ENCODE measurements at regions of chr2 and their contacts with region 1.

Region 1: DNA sequence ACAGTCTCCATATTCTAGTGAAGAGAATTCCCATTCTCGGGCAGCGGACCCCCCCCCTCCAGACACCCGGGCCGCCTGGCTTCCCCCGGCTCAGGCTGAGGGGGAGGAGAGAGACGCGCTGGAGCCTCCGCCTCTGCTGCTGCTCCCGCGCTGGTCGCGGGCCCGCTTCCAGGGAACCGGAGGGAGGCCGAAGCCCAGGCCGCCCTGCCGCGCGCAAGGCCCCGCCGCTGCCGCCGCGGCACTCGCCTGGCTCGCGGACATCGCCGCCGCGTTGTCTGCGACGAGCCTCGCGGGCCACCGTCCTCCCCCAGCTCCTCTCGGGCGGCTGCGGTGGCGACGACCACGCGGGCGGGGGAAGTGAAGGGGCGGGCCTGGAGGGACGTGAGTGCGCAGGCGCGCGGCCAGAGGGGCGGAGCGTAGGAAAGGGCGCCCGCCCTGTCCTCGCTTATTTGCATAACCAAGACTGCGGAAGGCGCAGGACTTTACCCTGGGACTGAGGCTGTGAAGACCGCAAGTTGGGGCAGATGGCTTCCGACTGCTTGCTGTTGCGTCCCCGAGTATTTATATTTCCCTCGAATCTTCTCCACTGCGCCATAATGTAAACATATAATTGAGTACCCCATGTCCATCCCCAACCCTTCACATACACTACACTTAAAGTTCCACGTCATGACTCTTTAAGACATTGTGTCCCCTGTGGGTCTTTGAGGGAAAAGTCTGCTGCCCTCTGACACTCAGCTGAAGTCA is at the start of gene ARL5A:
- DNase-seq: peak; percentile 97
- ATAC-seq: peak; percentile 95
- H3K4me3 Mint-ChIP-seq: peak within 1 kb of the TSS; percentile 83
- H3K27ac Mint-ChIP-seq: peak within 1 kb of the TSS; percentile 93
- H3K4me1 Mint-ChIP-seq: peaks cover 50% of the 10 kb centered on the region
- H3K27me3 Mint-ChIP-seq: no peaks in the 10 kb centered on the region
- CTCF ChIP-seq: no peak
- total RNA-seq, gene ARL5A: 51.0 and 53.2 TPM in 2 replicates

Region 2: GRCh38 chr2:151409601-151410484 is 418.5 kb before region 1 on chr2 and contains the start of gene RIF1:
- CTCF ChIA-PET with region 1: no interaction called
- POLR2A ChIA-PET with region 1: no interaction called
- intact Hi-C with region 1: loop called (anchors 2 kb)
- DNase-seq: peak; percentile 73
- ATAC-seq: peak; percentile 90
- H3K4me3 Mint-ChIP-seq: peak within 1 kb of the TSS; percentile 89
- H3K27ac Mint-ChIP-seq: peak within 1 kb of the TSS; percentile 80
- H3K4me1 Mint-ChIP-seq: peaks cover 26% of the 10 kb centered on the region
- H3K27me3 Mint-ChIP-seq: no peaks in the 10 kb centered on the region
- CTCF ChIP-seq: no peak
- total RNA-seq, gene RIF1: 43.7 and 51.1 TPM in 2 replicates

Region 3: GRCh38 chr2:151560289-151560688 is 268.0 kb before region 1 on chr2:
- CTCF ChIA-PET with region 1: no interaction called
- POLR2A ChIA-PET with region 1: no interaction called
- intact Hi-C with region 1: no loop called
- DNase-seq: no peak
- ATAC-seq: no peak
- H3K4me3 Mint-ChIP-seq: no peak overlapping the region
- H3K27ac Mint-ChIP-seq: no peak overlapping the region
- H3K4me1 Mint-ChIP-seq: peaks cover 6% of the 10 kb centered on the region
- H3K27me3 Mint-ChIP-seq: no peaks in the 10 kb centered on the region
- CTCF ChIP-seq: no peak

Region 4: DNA sequence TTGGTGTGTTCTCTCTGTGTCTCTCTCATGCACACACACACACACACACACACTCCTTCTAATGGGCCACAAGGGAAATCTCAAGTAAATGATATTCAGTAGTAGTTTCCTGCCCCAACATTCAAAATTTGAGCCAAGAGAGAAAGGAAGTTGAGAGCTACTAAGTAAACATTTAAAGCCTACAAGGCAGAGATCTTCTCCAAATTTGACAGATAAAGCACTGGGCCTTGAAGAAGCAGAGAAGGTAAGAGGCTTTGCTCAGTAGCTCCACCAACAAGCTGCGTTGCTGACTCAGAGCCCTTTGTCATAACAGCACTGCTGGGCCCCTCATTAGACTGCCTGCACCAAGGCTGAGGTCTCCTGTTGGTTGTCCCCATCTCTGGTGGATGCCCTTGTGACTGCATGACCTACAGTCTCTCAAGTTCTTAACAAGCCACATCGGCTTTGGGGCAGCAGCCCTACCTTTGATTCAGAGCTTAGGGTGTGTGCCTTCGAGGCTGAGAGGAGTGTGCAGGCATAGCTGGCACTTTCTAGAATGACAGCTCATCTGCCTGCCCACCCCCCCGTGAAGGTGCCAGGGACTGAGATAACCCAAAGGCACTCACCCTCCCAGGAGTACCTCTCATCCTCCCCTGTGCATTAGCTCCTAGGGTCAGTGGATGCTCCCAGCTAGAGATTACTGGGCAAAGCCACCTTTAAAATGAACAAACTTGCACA is 61.7 kb before region 1 on chr2:
- CTCF ChIA-PET with region 1: no interaction called
- POLR2A ChIA-PET with region 1: interaction called, 25 read pairs
- intact Hi-C with region 1: loop called (anchors 1 kb)
- DNase-seq: peak; percentile 47
- ATAC-seq: peak; percentile 71
- H3K4me3 Mint-ChIP-seq: peak overlapping the region; percentile 56
- H3K27ac Mint-ChIP-seq: peak overlapping the region; percentile 95
- H3K4me1 Mint-ChIP-seq: peaks cover 90% of the 10 kb centered on the region
- H3K27me3 Mint-ChIP-seq: no peaks in the 10 kb centered on the region
- CTCF ChIP-seq: no peak

Region 5: GRCh38 chr2:151842830-151843690 is 14.7 kb after region 1 on chr2:
- CTCF ChIA-PET with region 1: no interaction called
- POLR2A ChIA-PET with region 1: interaction called, 6 read pairs
- intact Hi-C with region 1: loop called (anchors 2 kb)
- DNase-seq: no peak
- ATAC-seq: no peak
- H3K4me3 Mint-ChIP-seq: no peak overlapping the region
- H3K27ac Mint-ChIP-seq: no peak overlapping the region
- H3K4me1 Mint-ChIP-seq: peaks cover 36% of the 10 kb centered on the region
- H3K27me3 Mint-ChIP-seq: no peaks in the 10 kb centered on the region
- CTCF ChIP-seq: no peak

Region 6: GRCh38 chr2:151886241-151886640 is 57.9 kb after region 1 on chr2:
- CTCF ChIA-PET with region 1: no interaction called
- POLR2A ChIA-PET with region 1: no interaction called
- intact Hi-C with region 1: no loop called
- DNase-seq: no peak
- ATAC-seq: no peak
- H3K4me3 Mint-ChIP-seq: no peak overlapping the region
- H3K27ac Mint-ChIP-seq: no peak overlapping the region
- H3K4me1 Mint-ChIP-seq: peaks cover 3% of the 10 kb centered on the region
- H3K27me3 Mint-ChIP-seq: no peaks in the 10 kb centered on the region
- CTCF ChIP-seq: no peak

Region 7: GRCh38 chr2:151946899-151947822 is 118.8 kb after region 1 on chr2:
- CTCF ChIA-PET with region 1: interaction called, 3 read pairs
- POLR2A ChIA-PET with region 1: no interaction called
- intact Hi-C with region 1: loop called (anchors 5 kb)
- DNase-seq: no peak
- ATAC-seq: peak; percentile 61
- H3K4me3 Mint-ChIP-seq: peak overlapping the region; percentile 72
- H3K27ac Mint-ChIP-seq: peak overlapping the region; percentile 3
- H3K4me1 Mint-ChIP-seq: peaks cover 14% of the 10 kb centered on the region
- H3K27me3 Mint-ChIP-seq: peaks cover 6% of the 10 kb centered on the region
- CTCF ChIP-seq: no peak